T-cell (primary cell): ENCODE measurements at regions of chr3 and their contacts with region 1.

Region 1: GRCh38 chr3:4350789-4351163 is 47.6 kb downstream of the SETMAR start:
- DNase-seq: peak in 33 of 35 experiments; percentile 8 to 87 (median 44)
- ATAC-seq: peak; percentile 80 to 92 (median 85)
- H3K4me3 ChIP-seq: peak overlapping the region in 1 of 2 donors; percentile 45
- H3K4me3 Mint-ChIP-seq: peak overlapping the region; percentile 27 to 70 (median 62)
- H3K27ac ChIP-seq: peak overlapping the region; percentile 50
- H3K27ac Mint-ChIP-seq: peak overlapping the region in 1 of 2 donors; percentile 13
- H3K4me1 ChIP-seq: no peaks in the 10 kb centered on the region
- H3K4me1 Mint-ChIP-seq: peaks cover 7 to 15% (median 15%) of the 10 kb centered on the region in 3 donors
- H3K27me3 ChIP-seq: no peaks in the 10 kb centered on the region
- H3K27me3 Mint-ChIP-seq: no peaks in the 10 kb centered on the region

Region 2: DNA sequence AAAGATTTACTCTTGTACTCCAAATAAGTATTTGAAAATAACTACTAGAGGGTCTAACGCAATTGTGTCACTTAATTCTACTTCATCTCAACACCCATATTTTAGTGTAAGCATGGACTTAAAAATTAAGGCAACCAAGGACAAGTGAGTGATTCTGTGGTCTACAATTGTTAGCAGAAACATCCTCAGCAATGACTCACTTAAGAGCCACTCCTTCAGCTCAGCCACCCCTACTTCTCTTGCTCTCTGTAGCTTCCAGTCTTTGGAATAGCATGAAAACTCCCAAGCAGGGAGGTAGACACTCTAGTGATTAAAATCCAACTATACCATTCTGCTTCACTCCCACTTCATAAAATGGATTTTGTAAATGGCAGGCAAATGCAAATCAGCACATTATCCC is 667.5 kb before region 1 on chr3:
- CTCF ChIA-PET with region 1: no interaction called
- POLR2A ChIA-PET with region 1: no interaction called
- DNase-seq: no peak
- ATAC-seq: no peak
- H3K4me3 ChIP-seq: no peak overlapping the region
- H3K4me3 Mint-ChIP-seq: no peak overlapping the region
- H3K27ac ChIP-seq: no peak overlapping the region
- H3K27ac Mint-ChIP-seq: no peak overlapping the region
- H3K4me1 ChIP-seq: no peaks in the 10 kb centered on the region
- H3K4me1 Mint-ChIP-seq: no peaks in the 10 kb centered on the region
- H3K27me3 ChIP-seq: no peaks in the 10 kb centered on the region
- H3K27me3 Mint-ChIP-seq: no peaks in the 10 kb centered on the region

Region 3: DNA sequence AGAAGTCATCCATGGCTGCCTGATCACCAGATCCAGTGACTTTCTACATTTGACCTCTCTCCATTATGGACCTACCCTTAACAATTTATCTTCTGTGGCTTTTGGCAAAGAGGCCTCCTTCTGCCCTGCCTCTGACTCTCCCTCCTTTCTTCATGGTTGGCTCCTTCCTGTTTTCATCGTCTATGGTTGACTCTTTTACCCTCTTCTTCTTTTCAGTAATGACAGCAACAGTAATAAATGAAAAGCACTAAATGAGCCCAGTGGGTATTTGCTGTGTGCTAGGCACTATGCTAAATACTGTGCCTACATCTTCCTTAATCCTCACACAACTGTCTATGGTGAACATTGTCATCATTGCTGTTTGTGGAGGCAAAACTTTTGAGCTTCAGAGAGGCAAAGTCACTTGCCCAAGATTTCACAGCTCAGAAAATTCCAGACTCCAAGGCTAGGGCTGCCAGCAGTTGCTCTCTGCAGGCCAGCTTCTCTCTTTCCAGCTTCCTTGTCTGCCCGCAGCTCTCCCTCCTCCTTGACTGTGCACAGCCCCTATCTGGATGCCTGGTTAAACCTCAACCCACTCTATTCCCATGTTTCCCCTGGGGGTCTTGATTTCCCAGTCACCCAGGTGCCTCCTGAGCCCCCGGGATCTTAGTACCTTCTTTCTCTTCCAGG is 167.0 kb after region 1 on chr3:
- CTCF ChIA-PET with region 1: interaction called in 1 of 2 experiments, 14 read pairs
- POLR2A ChIA-PET with region 1: no interaction called
- DNase-seq: no peak
- ATAC-seq: peak in 2 of 4 experiments; percentile 14 to 35
- H3K4me3 ChIP-seq: no peak overlapping the region
- H3K4me3 Mint-ChIP-seq: peak overlapping the region in 1 of 3 donors; percentile 63
- H3K27ac ChIP-seq: peak overlapping the region; percentile 85
- H3K27ac Mint-ChIP-seq: peak overlapping the region; percentile 76 to 90
- H3K4me1 ChIP-seq: peaks cover 15 to 25% of the 10 kb centered on the region in 2 experiments
- H3K4me1 Mint-ChIP-seq: peaks cover 47 to 50% (median 48%) of the 10 kb centered on the region in 3 donors
- H3K27me3 ChIP-seq: no peaks in the 10 kb centered on the region
- H3K27me3 Mint-ChIP-seq: no peaks in the 10 kb centered on the region

Region 4: DNA sequence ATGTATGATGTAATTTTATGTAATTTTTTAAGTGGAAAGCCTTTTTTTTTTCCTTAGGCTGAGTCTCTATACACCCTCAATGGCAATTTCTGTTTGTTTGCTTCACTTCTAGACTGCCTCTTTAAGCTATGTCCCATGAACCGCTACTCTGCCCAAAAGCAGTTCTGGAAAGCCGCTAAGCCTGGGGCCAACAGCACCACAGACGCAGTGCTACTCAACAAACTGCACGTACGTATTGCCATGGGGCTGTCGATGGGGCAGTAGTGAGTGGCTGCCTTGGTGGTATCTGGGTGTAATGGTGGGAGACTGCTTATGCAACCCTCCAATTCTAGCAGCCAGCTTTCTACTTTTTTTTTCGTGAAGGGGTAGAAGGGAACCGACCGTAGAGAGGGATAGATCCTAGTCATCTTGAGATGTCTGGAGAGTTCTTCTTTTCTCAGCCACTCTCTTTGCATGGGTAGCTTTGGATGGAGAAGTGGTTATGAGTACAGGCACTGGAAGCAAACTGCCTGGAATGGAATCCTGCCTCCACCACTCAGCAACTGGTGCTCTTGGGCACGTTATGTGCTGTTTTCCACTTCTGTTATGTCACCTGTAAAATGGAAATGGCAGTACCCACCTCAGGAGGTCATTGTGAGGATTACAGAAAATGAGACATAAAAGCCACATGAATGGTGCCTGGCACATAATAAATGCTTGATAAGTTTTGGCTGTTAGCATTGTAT is 277.0 kb after region 1 on chr3:
- CTCF ChIA-PET with region 1: interaction called, 25 to 48 read pairs
- POLR2A ChIA-PET with region 1: interaction called, 3 to 4 read pairs
- DNase-seq: no peak
- ATAC-seq: no peak
- H3K4me3 ChIP-seq: no peak overlapping the region
- H3K4me3 Mint-ChIP-seq: no peak overlapping the region
- H3K27ac ChIP-seq: no peak overlapping the region
- H3K27ac Mint-ChIP-seq: peak overlapping the region in 1 of 2 donors; percentile 22
- H3K4me1 ChIP-seq: no peaks in the 10 kb centered on the region
- H3K4me1 Mint-ChIP-seq: peaks cover 0 to 10% (median 4%) of the 10 kb centered on the region in 3 donors
- H3K27me3 ChIP-seq: no peaks in the 10 kb centered on the region
- H3K27me3 Mint-ChIP-seq: no peaks in the 10 kb centered on the region